A673 (cell line): ENCODE measurements at regions of chr16 and their contacts with region 1.

Region 1: DNA sequence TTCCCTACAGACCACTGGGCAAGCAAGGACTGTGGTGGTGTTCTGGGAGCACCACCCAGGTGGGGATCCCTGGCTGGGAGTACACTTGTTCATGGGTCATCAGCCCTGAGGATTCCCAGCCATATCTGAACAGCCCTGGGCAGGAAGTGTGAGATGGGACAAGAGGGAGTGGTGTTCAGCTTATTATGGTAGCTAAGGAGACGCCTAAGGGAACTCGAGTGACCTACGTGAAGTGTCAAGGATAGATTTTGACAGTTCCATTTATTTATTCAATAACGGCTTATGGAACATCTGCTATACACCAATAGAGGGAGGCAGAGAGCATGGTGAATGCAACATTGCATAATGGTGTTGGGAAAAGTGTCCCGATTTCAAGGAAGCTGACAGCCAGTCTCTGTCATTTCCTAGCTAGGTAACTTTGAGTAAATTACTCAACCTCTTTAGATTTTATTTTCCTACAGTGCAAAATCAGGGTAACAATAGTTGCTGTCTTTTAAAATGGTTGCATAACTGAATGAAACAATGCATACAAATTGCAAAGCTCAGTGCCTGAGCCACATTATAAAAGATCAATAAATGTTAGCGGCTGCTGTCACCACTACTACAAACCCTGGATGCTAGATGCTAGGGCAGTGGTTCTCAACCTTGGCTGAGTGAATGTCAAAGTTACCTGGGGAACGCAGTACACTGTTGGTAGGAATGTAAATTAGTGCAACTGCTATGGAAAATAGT is 534.1 kb downstream of the GRIN2A start:
- DNase-seq: peak; percentile 42
- H3K4me3 ChIP-seq: no peak overlapping the region
- H3K27ac ChIP-seq: no peak overlapping the region
- H3K4me1 ChIP-seq: no peaks in the 10 kb centered on the region
- H3K27me3 ChIP-seq: no peaks in the 10 kb centered on the region
- CTCF ChIP-seq: peak; percentile 78

Region 2: GRCh38 chr16:9139965-9140364 is 508.2 kb before region 1 on chr16:
- CTCF ChIA-PET with region 1: interaction called, 3 read pairs
- POLR2A ChIA-PET with region 1: no interaction called
- intact Hi-C with region 1: loop called (anchors 10 kb)
- DNase-seq: peak; percentile 78
- H3K4me3 ChIP-seq: no peak overlapping the region
- H3K27ac ChIP-seq: no peak overlapping the region
- H3K4me1 ChIP-seq: peaks cover 4% of the 10 kb centered on the region
- H3K27me3 ChIP-seq: no peaks in the 10 kb centered on the region
- CTCF ChIP-seq: no peak

Region 3: GRCh38 chr16:9489835-9490467 is 158.2 kb before region 1 on chr16:
- CTCF ChIA-PET with region 1: no interaction called
- POLR2A ChIA-PET with region 1: no interaction called
- intact Hi-C with region 1: no loop called
- DNase-seq: peak; percentile 40
- H3K4me3 ChIP-seq: no peak overlapping the region
- H3K27ac ChIP-seq: peak overlapping the region; percentile 1
- H3K4me1 ChIP-seq: no peaks in the 10 kb centered on the region
- H3K27me3 ChIP-seq: no peaks in the 10 kb centered on the region
- CTCF ChIP-seq: no peak

Region 4: GRCh38 chr16:9741776-9742175 is 93.6 kb after region 1 on chr16:
- CTCF ChIA-PET with region 1: no interaction called
- POLR2A ChIA-PET with region 1: interaction called, 33 read pairs
- intact Hi-C with region 1: no loop called
- DNase-seq: no peak
- H3K4me3 ChIP-seq: no peak overlapping the region
- H3K27ac ChIP-seq: no peak overlapping the region
- H3K4me1 ChIP-seq: no peaks in the 10 kb centered on the region
- H3K27me3 ChIP-seq: no peaks in the 10 kb centered on the region
- CTCF ChIP-seq: no peak

Region 5: DNA sequence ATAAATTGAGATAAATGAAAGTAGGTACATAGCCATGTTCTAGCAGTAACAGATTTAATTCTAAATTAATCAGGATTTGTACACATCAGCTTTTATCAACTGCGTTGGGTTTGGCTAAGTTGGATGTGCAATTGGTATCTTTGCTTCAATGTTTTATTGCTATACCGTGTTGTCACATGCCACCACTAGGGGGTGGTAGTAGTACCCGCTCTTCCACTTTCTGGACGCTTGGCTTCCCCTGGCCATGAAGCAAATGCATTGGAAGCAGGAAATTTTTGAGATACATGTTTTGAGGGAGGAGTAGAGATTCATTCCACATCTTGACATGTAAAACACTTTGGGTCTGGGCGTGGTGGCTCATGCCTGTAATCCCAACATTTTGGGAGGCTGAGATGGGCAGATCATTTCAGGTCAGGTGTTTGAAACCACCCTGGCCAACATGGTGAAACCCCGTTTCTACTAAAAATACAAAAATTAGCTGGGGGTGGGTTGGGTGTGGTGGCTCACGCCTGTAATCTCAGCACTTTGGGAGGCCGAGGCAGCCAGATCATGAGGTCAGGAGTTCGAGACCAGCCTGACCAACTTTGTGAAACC is 873.6 kb after region 1 on chr16:
- CTCF ChIA-PET with region 1: interaction called, 13 read pairs
- POLR2A ChIA-PET with region 1: no interaction called
- intact Hi-C with region 1: no loop called
- DNase-seq: peak; percentile 73
- H3K4me3 ChIP-seq: no peak overlapping the region
- H3K27ac ChIP-seq: no peak overlapping the region
- H3K4me1 ChIP-seq: no peaks in the 10 kb centered on the region
- H3K27me3 ChIP-seq: no peaks in the 10 kb centered on the region
- CTCF ChIP-seq: peak; percentile 79

Region 6: GRCh38 chr16:10876799-10877341 is 1228.7 kb after region 1 on chr16 and contains the start of gene CIITA:
- CTCF ChIA-PET with region 1: no interaction called
- POLR2A ChIA-PET with region 1: no interaction called
- intact Hi-C with region 1: no loop called
- DNase-seq: peak; percentile 33
- H3K4me3 ChIP-seq: no peak within 1 kb of the TSS
- H3K27ac ChIP-seq: no peak within 1 kb of the TSS
- H3K4me1 ChIP-seq: no peaks in the 10 kb centered on the region
- H3K27me3 ChIP-seq: peaks cover 93% of the 10 kb centered on the region
- CTCF ChIP-seq: no peak
- total RNA-seq, gene CIITA: not detected in 2 replicates

Region 7: GRCh38 chr16:11410376-11411058 is 1762.4 kb after region 1 on chr16:
- CTCF ChIA-PET with region 1: no interaction called
- POLR2A ChIA-PET with region 1: no interaction called
- intact Hi-C with region 1: no loop called
- DNase-seq: peak; percentile 35
- H3K4me3 ChIP-seq: no peak overlapping the region
- H3K27ac ChIP-seq: no peak overlapping the region
- H3K4me1 ChIP-seq: peaks cover 19% of the 10 kb centered on the region
- H3K27me3 ChIP-seq: no peaks in the 10 kb centered on the region
- CTCF ChIP-seq: no peak